Transverse colon (tissue), 4 donors: ENCODE measurements at regions of chr11 and their contacts with region 1.

Region 1: GRCh38 chr11:35969089-35970042 is 25.5 kb downstream of the LDLRAD3 start:
- DNase-seq: peak; percentile 10
- H3K4me3 ChIP-seq: no peak overlapping the region
- H3K27ac ChIP-seq: peak overlapping the region in 2 of 4 donors; percentile 15 to 28
- H3K4me1 ChIP-seq: peaks cover 0 to 13% (median 7%) of the 10 kb centered on the region in 4 donors
- H3K27me3 ChIP-seq: no peaks in the 10 kb centered on the region
- CTCF ChIP-seq: no peak
- EP300 ChIP-seq: no peak
- POLR2A ChIP-seq: no peak

Region 2: DNA sequence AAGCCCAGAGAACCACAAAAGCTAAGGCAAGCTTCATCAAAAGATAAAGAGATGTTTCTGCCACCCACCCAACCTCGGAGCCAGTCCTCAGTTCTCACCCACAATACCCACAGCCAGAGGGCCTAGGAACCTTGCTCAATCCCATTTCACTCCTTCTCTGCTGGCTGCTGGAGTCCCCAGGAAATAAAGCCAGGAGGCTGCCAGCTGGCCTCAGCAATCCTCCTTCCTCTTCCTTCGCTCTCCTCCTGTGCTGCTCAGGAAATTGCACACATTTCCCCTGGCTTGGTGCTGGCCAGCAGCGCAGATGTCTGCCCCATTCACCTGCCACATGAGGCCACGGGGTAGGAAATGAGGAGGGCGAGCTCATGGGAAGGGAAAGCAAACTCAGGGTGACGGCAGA is 117.3 kb before region 1 on chr11:
- in situ Hi-C with region 1: no loop called
- intact Hi-C with region 1: no loop called
- DNase-seq: peak; percentile 9
- H3K4me3 ChIP-seq: no peak overlapping the region
- H3K27ac ChIP-seq: no peak overlapping the region
- H3K4me1 ChIP-seq: no peaks in the 10 kb centered on the region
- H3K27me3 ChIP-seq: no peaks in the 10 kb centered on the region
- CTCF ChIP-seq: no peak
- EP300 ChIP-seq: no peak
- POLR2A ChIP-seq: no peak

Region 3: DNA sequence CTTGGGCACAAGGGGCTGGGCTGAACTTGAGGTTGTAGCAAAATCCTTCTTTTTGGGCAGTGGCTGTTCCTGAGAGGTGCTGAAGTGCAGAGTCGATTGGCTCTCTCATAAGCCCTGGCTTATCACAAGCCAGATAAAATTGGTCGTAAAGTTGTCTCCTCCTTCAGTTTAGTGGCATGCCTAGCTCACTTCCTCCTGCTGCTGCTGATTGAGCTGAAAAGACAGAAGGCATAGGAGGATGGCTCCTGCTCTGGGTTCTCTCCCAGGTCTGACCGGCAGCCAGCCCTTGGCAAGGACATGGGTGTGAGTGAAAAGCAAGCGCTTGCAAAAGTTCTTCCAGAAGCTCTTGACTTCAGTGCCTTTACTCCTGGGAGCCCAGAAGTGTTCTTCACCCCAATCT is 58.4 kb after region 1 on chr11:
- in situ Hi-C with region 1: no loop called
- intact Hi-C with region 1: loop called (anchors 2 kb)
- DNase-seq: no peak
- H3K4me3 ChIP-seq: no peak overlapping the region
- H3K27ac ChIP-seq: no peak overlapping the region
- H3K4me1 ChIP-seq: no peaks in the 10 kb centered on the region
- H3K27me3 ChIP-seq: no peaks in the 10 kb centered on the region
- CTCF ChIP-seq: no peak
- EP300 ChIP-seq: no peak
- POLR2A ChIP-seq: no peak